ENCODE measurements at regions of chr22 and their contacts with region 1.

Region 1: GRCh38 chr22:25362215-25362882 is 142.9 kb downstream of the CRYBB2 start:
- DNase-seq: no peak
- H3K4me3 ChIP-seq: no peak overlapping the region
- CTCF ChIP-seq: peak; percentile 86

Region 2: GRCh38 chr22:25318081-25318823 is 44.1 kb before region 1 on chr22:
- CTCF ChIA-PET with region 1: no interaction called
- POLR2A ChIA-PET with region 1: no interaction called
- DNase-seq: no peak
- H3K4me3 ChIP-seq: no peak overlapping the region
- CTCF ChIP-seq: no peak

Region 3: DNA sequence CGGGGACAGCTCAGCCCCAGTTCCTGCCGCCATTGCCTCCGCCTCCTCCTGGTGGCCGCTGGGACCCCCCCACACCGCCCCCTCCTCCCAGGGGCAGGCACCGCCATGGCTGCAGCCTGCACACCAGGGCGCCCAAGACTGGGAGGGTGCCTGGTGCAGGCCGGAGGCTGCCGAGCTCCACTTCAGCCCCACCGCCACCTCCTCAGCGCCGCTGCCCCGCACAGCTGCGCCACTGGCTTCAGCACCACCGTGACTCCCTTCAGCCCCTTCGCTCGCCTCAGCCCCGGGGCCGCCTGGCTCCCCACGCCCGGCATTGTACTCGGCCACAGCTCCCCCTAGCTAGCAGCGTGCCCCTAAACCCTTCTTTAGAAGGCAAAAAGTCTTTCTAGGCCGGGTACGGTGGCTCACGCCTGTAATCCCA is 11.8 kb before region 1 on chr22:
- CTCF ChIA-PET with region 1: interaction called, 14 read pairs
- POLR2A ChIA-PET with region 1: no interaction called
- DNase-seq: no peak
- H3K4me3 ChIP-seq: no peak overlapping the region
- CTCF ChIP-seq: no peak

Region 4: GRCh38 chr22:25494774-25495173 is 132.4 kb after region 1 on chr22:
- CTCF ChIA-PET with region 1: no interaction called
- POLR2A ChIA-PET with region 1: no interaction called
- DNase-seq: no peak
- H3K4me3 ChIP-seq: no peak overlapping the region
- CTCF ChIP-seq: no peak

Region 5: DNA sequence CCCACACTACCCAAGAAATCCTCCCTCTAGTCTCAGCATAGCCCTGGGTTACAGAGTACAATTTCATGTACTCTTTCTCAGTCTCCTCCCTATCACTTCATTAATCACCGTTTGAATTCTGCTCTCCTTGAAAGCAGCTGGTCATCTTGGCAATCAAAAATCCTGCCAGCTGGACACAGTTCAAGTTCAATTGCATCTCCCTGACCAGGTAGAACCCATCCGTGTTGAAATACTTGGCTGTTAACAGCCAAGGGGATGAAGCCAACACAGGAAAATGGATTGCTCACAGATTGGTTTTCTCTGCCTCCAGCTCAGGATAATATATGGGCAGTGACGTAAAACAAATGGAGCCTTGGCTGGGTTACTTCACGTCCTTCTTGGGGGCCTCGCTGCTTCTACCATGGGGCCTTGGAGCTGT is 147.0 kb after region 1 on chr22:
- CTCF ChIA-PET with region 1: no interaction called
- POLR2A ChIA-PET with region 1: no interaction called
- DNase-seq: no peak
- H3K4me3 ChIP-seq: no peak overlapping the region
- CTCF ChIP-seq: no peak

Measured in AG04449 (cell line).